Naive thymus-derived CD4-positive, alpha-beta T cell (primary cell): ENCODE measurements at regions of chr4 and their contacts with region 1.

Region 1: DNA sequence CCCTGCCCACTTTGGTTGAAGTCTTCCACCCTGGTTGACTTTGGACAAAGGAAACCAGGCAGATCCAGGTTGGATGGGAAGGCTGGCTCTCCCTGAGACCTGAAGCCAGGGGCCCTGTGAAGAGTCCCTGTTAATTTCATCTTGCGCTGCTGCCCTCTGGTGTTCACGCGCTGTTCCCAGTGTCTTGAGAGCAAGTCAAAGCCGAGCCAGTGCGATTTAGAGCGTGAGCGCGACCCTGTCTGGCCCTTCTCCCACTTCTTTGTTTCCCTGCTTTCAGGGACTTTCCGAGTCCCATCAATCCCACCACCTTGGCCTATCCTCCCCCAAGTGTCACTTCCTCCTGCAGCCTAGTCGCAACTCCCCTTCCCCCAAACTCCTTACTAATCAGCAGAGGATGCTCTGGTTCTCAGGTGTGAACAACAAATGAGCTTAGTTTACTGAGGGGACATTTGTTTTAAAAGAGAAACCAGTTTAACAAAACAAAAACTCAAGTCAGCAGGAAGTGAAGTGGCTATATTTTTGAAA is 25.8 kb upstream of the CHRNA9 start:
- DNase-seq: peak; percentile 75 to 89 (median 86)
- ATAC-seq: peak; percentile 79
- H3K4me3 ChIP-seq: peak overlapping the region; percentile 35
- H3K4me3 Mint-ChIP-seq: peak overlapping the region; percentile 67 to 91 (median 78)
- H3K27ac ChIP-seq: peak overlapping the region; percentile 87
- H3K27ac Mint-ChIP-seq: peak overlapping the region; percentile 94 to 100 (median 99)
- H3K4me1 ChIP-seq: peaks cover 50 to 81% of the 10 kb centered on the region in 2 donors
- H3K4me1 Mint-ChIP-seq: peaks cover 61 to 97% (median 90%) of the 10 kb centered on the region in 7 donors
- H3K27me3 ChIP-seq: no peaks in the 10 kb centered on the region
- H3K27me3 Mint-ChIP-seq: no peaks in the 10 kb centered on the region

Region 2: GRCh38 chr4:38663801-38664705 is 1645.3 kb before region 1 on chr4 and contains the start of gene KLF3:
- CTCF ChIA-PET with region 1: no interaction called
- POLR2A ChIA-PET with region 1: no interaction called
- intact Hi-C with region 1: loop called in 1 of 2 experiments (anchors 10 kb)
- DNase-seq: peak in 7 of 9 donors; percentile 91 to 95 (median 93)
- ATAC-seq: peak; percentile 86
- H3K4me3 ChIP-seq: peak within 1 kb of the TSS; percentile 64
- H3K4me3 Mint-ChIP-seq: peak within 1 kb of the TSS; percentile 85 to 100 (median 99)
- H3K27ac ChIP-seq: peak within 1 kb of the TSS; percentile 98
- H3K27ac Mint-ChIP-seq: peak within 1 kb of the TSS; percentile 85 to 100 (median 95)
- H3K4me1 ChIP-seq: peaks cover 33 to 50% of the 10 kb centered on the region in 2 donors
- H3K4me1 Mint-ChIP-seq: peaks cover 40 to 57% (median 53%) of the 10 kb centered on the region in 7 donors
- H3K27me3 ChIP-seq: no peaks in the 10 kb centered on the region
- H3K27me3 Mint-ChIP-seq: peaks cover 0 to 63% (median 0%) of the 10 kb centered on the region in 5 donors
- total RNA-seq, gene KLF3: 21.0 to 142 (median 132) TPM

Region 3: GRCh38 chr4:39383690-39384089 is 925.6 kb before region 1 on chr4:
- CTCF ChIA-PET with region 1: no interaction called
- POLR2A ChIA-PET with region 1: no interaction called
- intact Hi-C with region 1: no loop called
- DNase-seq: no peak
- ATAC-seq: no peak
- H3K4me3 ChIP-seq: no peak overlapping the region
- H3K4me3 Mint-ChIP-seq: no peak overlapping the region
- H3K27ac ChIP-seq: no peak overlapping the region
- H3K27ac Mint-ChIP-seq: no peak overlapping the region
- H3K4me1 ChIP-seq: no peaks in the 10 kb centered on the region
- H3K4me1 Mint-ChIP-seq: no peaks in the 10 kb centered on the region
- H3K27me3 ChIP-seq: no peaks in the 10 kb centered on the region
- H3K27me3 Mint-ChIP-seq: peaks cover 0 to 27% (median 7%) of the 10 kb centered on the region in 5 donors

Region 4: GRCh38 chr4:40149960-40150385 is 159.3 kb before region 1 on chr4:
- CTCF ChIA-PET with region 1: interaction called, 63 read pairs
- POLR2A ChIA-PET with region 1: interaction called, 21 read pairs
- intact Hi-C with region 1: loop called (anchors 1 kb)
- DNase-seq: peak; percentile 28 to 85 (median 77)
- ATAC-seq: peak; percentile 98
- H3K4me3 ChIP-seq: no peak overlapping the region
- H3K4me3 Mint-ChIP-seq: peak overlapping the region in 6 of 10 donors; percentile 11 to 64 (median 44)
- H3K27ac ChIP-seq: peak overlapping the region; percentile 0
- H3K27ac Mint-ChIP-seq: peak overlapping the region; percentile 62 to 94 (median 89)
- H3K4me1 ChIP-seq: peaks cover 4 to 42% of the 10 kb centered on the region in 2 donors
- H3K4me1 Mint-ChIP-seq: peaks cover 2 to 52% (median 44%) of the 10 kb centered on the region in 7 donors
- H3K27me3 ChIP-seq: no peaks in the 10 kb centered on the region
- H3K27me3 Mint-ChIP-seq: no peaks in the 10 kb centered on the region

Region 5: DNA sequence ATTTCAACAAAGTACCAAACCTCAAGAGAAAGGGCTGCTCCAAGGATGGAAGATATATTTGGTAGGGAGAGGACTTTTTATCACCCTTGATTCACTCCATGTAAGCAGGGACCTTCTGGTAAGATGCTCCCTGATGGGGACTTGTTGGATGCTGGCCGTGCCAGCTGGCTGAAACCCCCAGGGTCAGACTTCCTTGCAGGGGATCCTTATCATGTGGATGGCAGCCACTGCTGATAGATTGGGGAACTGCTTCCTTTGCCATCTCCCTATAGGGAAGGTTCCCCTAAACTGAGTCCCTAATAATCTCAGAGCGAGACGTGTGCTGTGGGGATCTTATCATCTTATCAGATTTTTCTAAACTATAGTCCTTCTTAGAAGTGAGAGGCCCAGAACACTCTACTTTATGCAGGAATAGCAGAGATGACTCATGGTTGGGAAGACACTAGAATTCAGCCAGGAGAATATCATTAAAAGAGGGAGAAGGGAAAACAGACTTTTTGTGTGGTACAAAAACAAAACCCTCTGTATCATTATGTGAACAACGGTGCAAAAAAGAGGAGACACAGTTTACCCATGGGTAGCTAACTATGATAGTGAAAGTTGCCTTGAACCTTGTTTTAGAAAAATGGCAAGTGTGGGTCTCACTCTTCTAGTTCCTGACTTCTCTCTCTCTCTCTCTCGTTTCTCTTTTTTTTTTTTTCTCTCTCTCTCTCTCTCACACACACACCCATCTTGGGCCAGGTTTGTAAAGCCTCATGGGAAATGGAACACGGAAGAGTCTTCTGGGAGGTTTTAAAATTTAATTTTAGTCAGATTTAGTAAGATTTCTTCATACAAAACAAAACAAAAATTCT is 96.4 kb before region 1 on chr4:
- CTCF ChIA-PET with region 1: interaction called, 6 read pairs
- POLR2A ChIA-PET with region 1: interaction called, 67 read pairs
- intact Hi-C with region 1: no loop called
- DNase-seq: no peak
- ATAC-seq: no peak
- H3K4me3 ChIP-seq: peak overlapping the region; percentile 41
- H3K4me3 Mint-ChIP-seq: peak overlapping the region; percentile 52 to 100 (median 76)
- H3K27ac ChIP-seq: peak overlapping the region; percentile 100
- H3K27ac Mint-ChIP-seq: peak overlapping the region; percentile 79 to 99 (median 94)
- H3K4me1 ChIP-seq: peaks cover 71 to 87% of the 10 kb centered on the region in 2 donors
- H3K4me1 Mint-ChIP-seq: peaks cover 76 to 99% (median 90%) of the 10 kb centered on the region in 7 donors
- H3K27me3 ChIP-seq: no peaks in the 10 kb centered on the region
- H3K27me3 Mint-ChIP-seq: no peaks in the 10 kb centered on the region

Region 6: GRCh38 chr4:40247350-40247749 is 62.0 kb before region 1 on chr4:
- CTCF ChIA-PET with region 1: interaction called, 5 read pairs
- POLR2A ChIA-PET with region 1: interaction called, 206 read pairs
- intact Hi-C with region 1: loop called (anchors 1 to 2 kb)
- DNase-seq: peak in 7 of 9 donors; percentile 68 to 75 (median 73)
- ATAC-seq: peak; percentile 83
- H3K4me3 ChIP-seq: peak overlapping the region; percentile 14
- H3K4me3 Mint-ChIP-seq: peak overlapping the region; percentile 37 to 83 (median 69)
- H3K27ac ChIP-seq: peak overlapping the region; percentile 78
- H3K27ac Mint-ChIP-seq: peak overlapping the region; percentile 84 to 99 (median 96)
- H3K4me1 ChIP-seq: peaks cover 61 to 82% of the 10 kb centered on the region in 2 donors
- H3K4me1 Mint-ChIP-seq: peaks cover 53 to 93% (median 84%) of the 10 kb centered on the region in 7 donors
- H3K27me3 ChIP-seq: no peaks in the 10 kb centered on the region
- H3K27me3 Mint-ChIP-seq: no peaks in the 10 kb centered on the region

Region 7: GRCh38 chr4:40289366-40290188 is 19.7 kb before region 1 on chr4:
- CTCF ChIA-PET with region 1: interaction called, 18 read pairs
- POLR2A ChIA-PET with region 1: interaction called, 113 read pairs
- intact Hi-C with region 1: loop called (anchors 1 kb)
- DNase-seq: peak in 8 of 9 donors; percentile 38 to 75 (median 64)
- ATAC-seq: peak; percentile 89
- H3K4me3 ChIP-seq: peak overlapping the region; percentile 3
- H3K4me3 Mint-ChIP-seq: peak overlapping the region; percentile 35 to 88 (median 70)
- H3K27ac ChIP-seq: peak overlapping the region; percentile 65
- H3K27ac Mint-ChIP-seq: peak overlapping the region in 8 of 9 donors; percentile 83 to 96 (median 92)
- H3K4me1 ChIP-seq: peaks cover 18 to 45% of the 10 kb centered on the region in 2 donors
- H3K4me1 Mint-ChIP-seq: peaks cover 40 to 84% (median 67%) of the 10 kb centered on the region in 7 donors
- H3K27me3 ChIP-seq: no peaks in the 10 kb centered on the region
- H3K27me3 Mint-ChIP-seq: no peaks in the 10 kb centered on the region

Region 8: DNA sequence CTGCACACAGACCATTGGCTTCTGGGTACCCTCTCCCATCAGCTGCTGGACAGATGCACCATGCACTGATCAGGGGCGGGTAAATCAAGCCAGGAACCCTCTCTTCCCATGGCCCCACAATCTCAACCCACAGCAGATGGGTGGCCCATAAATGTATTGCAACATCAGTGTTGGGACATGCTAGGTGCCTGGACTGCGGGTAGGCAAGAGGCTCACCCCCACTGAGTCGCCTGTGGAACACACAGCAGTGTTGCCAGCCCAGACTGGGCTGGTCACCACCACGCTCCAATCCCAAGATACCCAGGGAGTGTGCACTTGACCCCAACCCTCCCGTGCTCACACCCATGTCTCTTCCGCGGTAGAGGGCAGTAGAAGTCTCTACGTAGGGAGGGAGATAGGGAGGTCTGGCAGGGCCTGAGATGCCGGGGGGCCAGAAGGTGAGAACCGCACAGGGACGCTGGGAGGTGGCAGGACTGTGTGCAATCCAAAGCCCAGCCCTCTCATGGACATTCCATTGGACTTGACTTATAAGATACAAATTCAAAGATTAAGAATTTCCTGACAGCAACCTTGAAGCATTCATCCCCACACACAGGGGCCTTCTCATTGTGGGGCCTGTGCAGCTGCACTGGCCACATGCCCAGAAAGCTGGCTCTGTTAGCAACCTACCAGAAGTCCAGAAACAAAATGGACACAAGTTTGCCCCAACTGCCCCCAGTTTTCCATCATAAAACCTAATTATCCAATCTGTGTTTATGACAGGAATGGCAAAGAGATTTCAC is 624.2 kb after region 1 on chr4:
- CTCF ChIA-PET with region 1: no interaction called
- POLR2A ChIA-PET with region 1: no interaction called
- intact Hi-C with region 1: no loop called
- DNase-seq: no peak
- ATAC-seq: no peak
- H3K4me3 ChIP-seq: no peak overlapping the region
- H3K4me3 Mint-ChIP-seq: no peak overlapping the region
- H3K27ac ChIP-seq: no peak overlapping the region
- H3K27ac Mint-ChIP-seq: no peak overlapping the region
- H3K4me1 ChIP-seq: no peaks in the 10 kb centered on the region
- H3K4me1 Mint-ChIP-seq: no peaks in the 10 kb centered on the region
- H3K27me3 ChIP-seq: no peaks in the 10 kb centered on the region
- H3K27me3 Mint-ChIP-seq: peaks cover 0 to 21% (median 9%) of the 10 kb centered on the region in 5 donors